ENCODE measurements at regions of chr5 and their contacts with region 1.

Region 1: DNA sequence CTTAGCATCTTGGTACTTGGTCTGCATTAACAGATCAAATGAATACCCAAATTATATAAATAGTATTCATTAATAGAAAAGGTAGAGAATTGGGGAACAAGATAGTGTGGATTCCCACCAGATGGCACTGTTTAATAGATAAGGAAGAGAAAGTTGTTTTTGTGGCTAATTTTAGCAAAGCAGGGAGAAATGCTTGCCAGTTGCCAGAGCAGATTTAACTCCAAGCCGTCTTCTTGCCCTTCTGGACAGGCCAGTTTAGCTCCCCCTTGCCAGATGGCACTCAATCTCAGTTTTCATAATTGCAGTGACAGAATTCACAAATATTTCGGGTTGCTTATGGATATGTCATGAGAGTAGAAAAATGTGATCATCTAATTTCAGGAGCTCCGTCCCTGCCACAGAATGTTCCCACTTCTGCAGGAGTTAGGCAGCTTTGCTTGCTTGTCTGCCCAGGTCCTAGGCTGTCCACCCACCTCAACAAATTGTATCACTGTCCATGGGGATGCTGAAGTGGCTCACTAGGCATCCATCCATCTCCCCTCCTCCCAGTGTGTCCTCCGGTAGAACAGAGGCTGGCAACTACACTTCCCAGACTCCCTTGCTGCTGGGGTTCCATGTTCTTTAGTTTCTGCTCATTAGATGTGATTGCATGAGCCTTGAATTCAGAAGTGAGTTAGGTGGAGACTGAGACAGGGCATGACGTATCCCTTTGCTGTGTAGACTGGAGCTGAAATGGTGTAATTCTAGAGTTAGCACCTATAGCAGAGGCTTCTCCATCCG is 11.8 kb upstream of the HEXB start:
- DNase-seq: no peak
- H3K4me3 ChIP-seq: peak overlapping the region in 2 of 8 donors; percentile 3 to 47
- H3K27ac ChIP-seq: no peak overlapping the region
- H3K4me1 ChIP-seq: no peaks in the 10 kb centered on the region
- H3K27me3 ChIP-seq: peaks cover 0 to 3% (median 0%) of the 10 kb centered on the region in 7 donors
- CTCF ChIP-seq: peak in 8 of 11 experiments; percentile 28 to 56 (median 41)
- POLR2A ChIP-seq: no peak

Region 2: DNA sequence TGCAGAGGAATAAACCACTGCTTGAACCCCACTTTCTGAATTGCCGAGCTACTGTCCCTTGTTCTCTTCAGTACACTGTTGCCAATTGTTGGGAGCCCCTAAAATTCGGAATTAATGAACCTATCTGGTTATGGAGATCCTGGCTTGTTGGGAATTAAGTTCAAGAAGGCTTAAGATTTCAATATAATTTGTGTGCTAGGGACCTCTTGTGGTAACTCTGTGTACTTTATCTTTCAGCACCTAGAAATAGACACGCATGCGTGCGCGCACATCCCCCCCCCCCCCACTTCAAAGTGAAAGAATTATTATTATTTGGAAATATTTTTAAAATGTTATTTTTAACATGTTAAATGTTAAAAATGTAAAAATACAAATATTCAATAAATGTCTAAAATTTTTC is 246.3 kb after region 1 on chr5:
- intact Hi-C with region 1: loop called (anchors 5 kb)
- DNase-seq: no peak
- H3K4me3 ChIP-seq: no peak overlapping the region
- H3K27ac ChIP-seq: no peak overlapping the region
- H3K4me1 ChIP-seq: no peaks in the 10 kb centered on the region
- H3K27me3 ChIP-seq: no peaks in the 10 kb centered on the region
- CTCF ChIP-seq: peak in 9 of 11 experiments; percentile 23 to 67 (median 53)
- POLR2A ChIP-seq: no peak

Region 3: DNA sequence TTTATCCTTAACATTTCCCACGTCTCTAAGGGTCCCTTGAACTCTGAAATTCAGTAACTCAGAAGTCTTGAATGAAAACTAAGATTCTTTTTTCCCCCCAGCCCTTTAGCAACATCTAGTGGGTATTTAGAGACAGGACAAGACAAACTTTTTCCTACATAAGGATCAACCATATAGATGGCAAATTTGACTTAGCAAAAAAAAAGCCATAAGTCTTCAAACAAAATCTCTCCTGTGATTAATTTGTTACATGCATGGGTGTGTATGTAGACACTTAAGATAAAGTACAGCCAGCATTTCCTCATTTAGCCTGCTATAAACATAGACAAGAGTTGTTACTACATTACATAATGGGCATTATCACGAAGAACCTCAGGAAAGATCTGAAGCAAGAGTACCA is 592.5 kb after region 1 on chr5:
- intact Hi-C with region 1: loop called (anchors 5 kb)
- DNase-seq: no peak
- H3K4me3 ChIP-seq: no peak overlapping the region
- H3K27ac ChIP-seq: no peak overlapping the region
- H3K4me1 ChIP-seq: no peaks in the 10 kb centered on the region
- H3K27me3 ChIP-seq: no peaks in the 10 kb centered on the region
- CTCF ChIP-seq: peak in 4 of 11 experiments; percentile 20 to 43 (median 30)
- POLR2A ChIP-seq: no peak

Measured in spleen (tissue), 13 donors.